ENCODE measurements at regions of chr14 and their contacts with region 1.

Region 1: GRCh38 chr14:95979339-95980042 is 59.7 kb upstream of the C14orf132 start:
- DNase-seq: no peak
- ATAC-seq: no peak
- H3K4me3 Mint-ChIP-seq: no peak overlapping the region
- H3K27ac Mint-ChIP-seq: no peak overlapping the region
- H3K4me1 Mint-ChIP-seq: no peaks in the 10 kb centered on the region
- H3K27me3 Mint-ChIP-seq: peaks cover 14% of the 10 kb centered on the region
- CTCF ChIP-seq: no peak

Region 2: GRCh38 chr14:95915323-95915722 is 64.2 kb before region 1 on chr14:
- CTCF ChIA-PET with region 1: no interaction called
- POLR2A ChIA-PET with region 1: no interaction called
- intact Hi-C with region 1: no loop called
- DNase-seq: no peak
- ATAC-seq: no peak
- H3K4me3 Mint-ChIP-seq: no peak overlapping the region
- H3K27ac Mint-ChIP-seq: no peak overlapping the region
- H3K4me1 Mint-ChIP-seq: no peaks in the 10 kb centered on the region
- H3K27me3 Mint-ChIP-seq: peaks cover 6% of the 10 kb centered on the region
- CTCF ChIP-seq: no peak

Region 3: DNA sequence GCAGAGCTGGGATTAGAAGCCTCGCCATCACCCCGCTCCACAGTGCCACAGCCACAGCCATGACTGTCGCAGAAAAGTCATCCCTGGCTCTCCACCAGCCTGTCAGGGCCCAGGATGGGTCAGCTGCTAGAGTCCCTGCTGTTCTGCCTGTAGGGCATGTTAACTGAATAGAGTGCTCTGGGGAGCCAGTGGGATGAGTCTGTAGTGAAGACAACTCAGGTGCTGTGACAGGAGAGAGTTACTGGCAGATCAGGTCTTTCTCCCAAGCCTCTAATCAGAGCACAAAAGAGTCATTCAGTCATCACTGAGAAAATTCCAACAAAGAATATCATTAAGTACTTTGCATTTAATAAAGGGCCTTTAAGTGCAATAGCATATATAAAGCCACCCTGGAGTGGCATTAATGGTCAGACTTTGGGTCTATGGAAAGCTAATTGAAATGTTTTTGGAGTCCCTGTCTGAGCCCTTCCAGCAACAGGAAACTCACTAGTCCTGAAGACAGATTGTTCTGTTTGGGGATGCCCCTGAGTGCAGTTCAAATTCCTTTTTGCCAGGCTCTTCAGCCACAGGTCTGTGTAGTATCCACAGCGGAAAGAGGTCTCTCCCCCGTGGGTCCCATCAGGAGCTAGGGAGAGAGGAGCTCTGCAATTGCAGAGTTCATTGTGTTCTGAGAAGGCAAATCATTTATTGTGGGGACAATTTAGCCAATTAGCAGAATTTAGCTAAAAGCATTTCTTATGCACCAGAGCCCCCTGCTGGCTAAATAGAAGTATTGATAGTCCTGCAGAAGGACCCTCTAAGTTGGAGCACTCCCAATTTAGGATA is 14.5 kb after region 1 on chr14:
- CTCF ChIA-PET with region 1: interaction called, 15 read pairs
- POLR2A ChIA-PET with region 1: no interaction called
- intact Hi-C with region 1: no loop called
- DNase-seq: peak; percentile 31
- ATAC-seq: no peak
- H3K4me3 Mint-ChIP-seq: no peak overlapping the region
- H3K27ac Mint-ChIP-seq: no peak overlapping the region
- H3K4me1 Mint-ChIP-seq: no peaks in the 10 kb centered on the region
- H3K27me3 Mint-ChIP-seq: peaks cover 31% of the 10 kb centered on the region
- CTCF ChIP-seq: peak; percentile 86

Measured in activated CD8-positive, alpha-beta T cell treated with anti-CD3 and anti-CD28 coated beads for 36 hours (primary cell).